PC-9 (cell line): ENCODE measurements at regions of chrX and their contacts with region 1.

Region 1: GRCh38 chrX:19673375-19674040 is 158.2 kb upstream of the MAP3K15 start:
- DNase-seq: peak; percentile 87 to 88
- H3K4me3 ChIP-seq: no peak overlapping the region
- H3K27ac ChIP-seq: peak overlapping the region; percentile 93
- H3K4me1 ChIP-seq: peaks cover 83% of the 10 kb centered on the region
- H3K27me3 ChIP-seq: no peaks in the 10 kb centered on the region
- CTCF ChIP-seq: no peak

Region 2: GRCh38 chrX:19392703-19393102 is 280.8 kb before region 1 on chrX:
- CTCF ChIA-PET with region 1: no interaction called
- POLR2A ChIA-PET with region 1: interaction called, 15 read pairs
- intact Hi-C with region 1: no loop called
- DNase-seq: no peak
- H3K4me3 ChIP-seq: no peak overlapping the region
- H3K27ac ChIP-seq: no peak overlapping the region
- H3K4me1 ChIP-seq: no peaks in the 10 kb centered on the region
- H3K27me3 ChIP-seq: no peaks in the 10 kb centered on the region; the same call in 1 of the 2 replicates
- CTCF ChIP-seq: no peak

Region 3: DNA sequence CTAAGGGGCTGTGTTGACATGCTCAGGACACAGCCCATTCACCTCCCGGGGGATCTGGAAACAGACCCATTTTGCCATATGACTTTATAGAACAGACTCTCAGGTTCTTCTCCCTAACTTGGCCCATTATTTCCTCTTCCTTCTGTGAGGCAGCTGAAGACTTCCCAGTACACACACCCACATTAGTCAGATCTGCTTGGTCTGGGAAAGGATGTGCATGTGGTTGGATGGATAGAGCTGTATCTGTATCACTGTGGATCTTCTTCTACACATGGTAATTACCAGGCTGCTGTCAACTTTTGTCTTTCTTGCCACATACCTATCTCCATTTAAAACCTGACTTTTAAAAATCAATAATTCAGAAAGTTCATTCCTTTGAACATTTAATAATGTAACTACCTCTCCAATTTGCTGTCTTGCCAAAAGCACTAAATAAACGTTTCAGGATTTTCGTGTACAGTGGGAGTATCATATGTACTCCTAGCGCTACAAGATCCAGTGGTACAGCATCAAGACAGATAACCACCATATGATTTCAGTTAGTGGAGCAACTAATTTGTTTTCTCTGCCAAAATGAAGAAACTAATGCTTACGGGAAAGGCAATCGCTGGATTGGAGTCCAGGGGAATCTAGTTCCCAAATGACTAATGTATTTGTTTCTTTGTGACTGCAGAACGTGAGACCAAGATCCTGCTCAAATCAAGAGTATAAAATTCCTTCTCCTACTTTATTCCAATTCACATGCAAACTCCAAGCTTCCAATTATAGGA is 24.1 kb before region 1 on chrX:
- CTCF ChIA-PET with region 1: no interaction called
- POLR2A ChIA-PET with region 1: no interaction called
- intact Hi-C with region 1: loop called (anchors 2 kb)
- DNase-seq: no peak
- H3K4me3 ChIP-seq: no peak overlapping the region
- H3K27ac ChIP-seq: no peak overlapping the region
- H3K4me1 ChIP-seq: no peaks in the 10 kb centered on the region
- H3K27me3 ChIP-seq: no peaks in the 10 kb centered on the region
- CTCF ChIP-seq: no peak

Region 4: DNA sequence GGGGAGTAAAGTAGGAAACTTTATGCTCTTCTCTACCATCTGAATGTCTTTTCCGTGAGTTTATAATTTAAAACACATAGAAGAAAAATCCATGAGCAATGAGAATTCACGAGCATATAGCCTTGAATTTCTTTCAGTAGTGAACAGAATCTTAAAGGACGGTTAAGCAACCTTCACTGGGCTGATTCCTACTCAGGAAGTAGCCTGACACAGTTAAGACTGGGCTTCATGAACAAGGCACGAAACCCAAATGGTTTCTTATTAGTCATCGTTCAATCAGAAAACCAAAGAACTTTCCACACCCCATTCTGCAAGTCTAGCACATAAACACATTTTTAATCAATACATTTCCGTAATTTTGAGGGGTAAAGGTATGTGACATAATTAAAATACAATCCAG is 118.1 kb after region 1 on chrX:
- CTCF ChIA-PET with region 1: no interaction called
- POLR2A ChIA-PET with region 1: no interaction called
- intact Hi-C with region 1: no loop called
- DNase-seq: no peak
- H3K4me3 ChIP-seq: no peak overlapping the region
- H3K27ac ChIP-seq: no peak overlapping the region
- H3K4me1 ChIP-seq: no peaks in the 10 kb centered on the region
- H3K27me3 ChIP-seq: no peaks in the 10 kb centered on the region
- CTCF ChIP-seq: no peak

Region 5: DNA sequence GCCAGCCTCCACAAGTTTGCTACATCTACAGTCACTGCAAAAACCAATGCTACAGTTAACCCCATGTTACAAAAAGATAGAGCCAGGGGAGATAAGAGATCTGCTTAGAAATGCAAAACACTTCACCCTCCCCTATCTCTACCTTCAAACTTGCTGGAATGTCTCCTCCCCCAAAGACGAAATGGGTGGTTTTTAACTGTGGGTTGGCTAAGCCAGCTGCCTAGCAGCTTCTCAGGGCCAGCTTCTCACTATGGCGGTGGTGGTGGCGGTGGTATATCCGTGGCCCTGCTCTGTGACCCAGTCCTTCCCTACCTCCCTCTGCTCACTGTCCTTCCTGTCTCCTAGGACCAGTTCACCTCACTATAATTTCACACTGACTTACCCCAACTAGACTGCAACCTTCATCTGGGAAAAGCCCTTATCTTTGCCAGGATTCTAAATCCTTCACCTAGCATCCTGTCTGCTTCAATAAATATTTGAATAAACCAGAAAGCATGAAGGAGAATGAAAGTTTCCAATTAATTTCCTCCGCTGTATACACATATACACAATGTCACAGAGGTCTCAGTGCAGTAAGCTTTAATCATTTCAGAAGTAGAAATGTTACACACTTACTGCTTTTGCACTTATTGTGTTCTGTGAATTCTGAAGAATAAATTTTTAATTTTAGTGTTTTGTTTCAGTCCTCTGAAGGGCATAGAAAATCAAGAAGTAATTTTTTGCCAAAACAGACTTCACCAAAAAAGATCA is 167.6 kb after region 1 on chrX:
- CTCF ChIA-PET with region 1: no interaction called
- POLR2A ChIA-PET with region 1: interaction called, 12 read pairs
- intact Hi-C with region 1: no loop called
- DNase-seq: no peak
- H3K4me3 ChIP-seq: no peak overlapping the region
- H3K27ac ChIP-seq: no peak overlapping the region
- H3K4me1 ChIP-seq: peaks cover 22% of the 10 kb centered on the region
- H3K27me3 ChIP-seq: no peaks in the 10 kb centered on the region
- CTCF ChIP-seq: no peak

Region 6: DNA sequence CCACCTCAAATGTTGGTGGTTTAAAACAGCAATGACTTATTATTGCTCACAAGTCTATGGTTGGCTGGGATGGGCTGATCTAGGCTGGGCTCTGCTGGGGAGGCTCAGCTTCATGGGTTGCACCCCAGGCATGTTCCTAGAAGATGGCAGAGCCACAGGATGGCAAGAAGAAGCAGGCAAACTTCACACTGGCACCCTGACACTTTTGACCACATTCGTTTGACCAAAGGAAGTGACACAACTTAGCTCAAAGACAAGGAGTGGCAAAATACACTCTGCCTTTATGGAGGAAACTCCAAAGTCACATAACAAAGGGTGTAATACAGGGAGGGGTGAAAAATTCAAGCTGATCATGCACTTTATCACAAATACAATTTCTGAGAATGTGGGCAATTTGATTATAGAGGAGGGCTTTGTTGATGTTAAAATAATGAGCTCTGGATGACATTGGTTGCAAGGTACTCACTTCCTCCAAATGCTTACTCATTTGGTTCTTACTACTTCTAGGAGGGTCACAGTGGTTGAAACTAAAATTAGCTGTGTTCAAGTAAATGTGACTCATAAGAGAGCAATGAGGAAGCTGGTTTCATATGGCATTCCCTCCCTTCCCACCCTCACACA is 842.4 kb after region 1 on chrX:
- CTCF ChIA-PET with region 1: no interaction called
- POLR2A ChIA-PET with region 1: interaction called, 12 read pairs
- intact Hi-C with region 1: no loop called
- DNase-seq: peak; percentile 8 to 92
- H3K4me3 ChIP-seq: no peak overlapping the region
- H3K27ac ChIP-seq: peak overlapping the region; percentile 94
- H3K4me1 ChIP-seq: peaks cover 38% of the 10 kb centered on the region
- H3K27me3 ChIP-seq: no peaks in the 10 kb centered on the region
- CTCF ChIP-seq: no peak